ENCODE measurements at regions of chr2 and their contacts with region 1.

Region 1: GRCh38 chr2:171574149-171574795 is 52.0 kb downstream of the CYBRD1 start:
- DNase-seq: peak; percentile 66
- H3K4me3 ChIP-seq: no peak overlapping the region
- H3K27ac ChIP-seq: no peak overlapping the region
- H3K4me1 ChIP-seq: no peaks in the 10 kb centered on the region
- H3K27me3 ChIP-seq: no peaks in the 10 kb centered on the region
- CTCF ChIP-seq: peak; percentile 95 to 97

Region 2: GRCh38 chr2:170973492-170974303 is 600.6 kb before region 1 on chr2:
- CTCF ChIA-PET with region 1: no interaction called
- dilution Hi-C with region 1: no loop called
- in situ Hi-C with region 1: no loop called
- intact Hi-C with region 1: loop called (anchors 10 kb)
- DNase-seq: peak; percentile 9
- H3K4me3 ChIP-seq: peak overlapping the region; percentile 51 to 69 (median 65)
- H3K27ac ChIP-seq: peak overlapping the region; percentile 16
- H3K4me1 ChIP-seq: peaks cover 15% of the 10 kb centered on the region
- H3K27me3 ChIP-seq: no peaks in the 10 kb centered on the region
- CTCF ChIP-seq: peak; percentile 68 to 75

Region 3: DNA sequence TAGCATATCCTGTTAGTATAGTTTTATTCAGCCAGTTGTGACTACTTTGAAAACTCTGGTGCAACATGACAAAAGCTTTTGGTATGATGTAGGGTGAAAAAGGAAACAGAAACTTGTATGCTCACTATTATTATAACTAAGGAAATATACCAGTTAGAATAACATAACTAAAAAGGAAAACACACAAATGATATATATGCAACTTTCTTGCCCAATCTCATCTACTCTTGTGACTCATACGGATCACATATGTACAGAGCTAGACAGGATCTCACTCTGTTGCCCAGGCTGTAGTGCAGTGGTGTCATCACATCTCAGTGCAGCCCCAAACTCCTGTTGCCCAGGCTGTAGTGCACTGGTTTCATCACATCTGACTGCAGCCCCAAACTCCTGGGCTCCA is 401.2 kb before region 1 on chr2:
- CTCF ChIA-PET with region 1: no interaction called
- dilution Hi-C with region 1: no loop called
- in situ Hi-C with region 1: no loop called
- intact Hi-C with region 1: no loop called
- DNase-seq: no peak
- H3K4me3 ChIP-seq: no peak overlapping the region
- H3K27ac ChIP-seq: no peak overlapping the region
- H3K4me1 ChIP-seq: peaks cover 4% of the 10 kb centered on the region
- H3K27me3 ChIP-seq: no peaks in the 10 kb centered on the region
- CTCF ChIP-seq: no peak

Region 4: GRCh38 chr2:171307560-171307959 is 266.7 kb before region 1 on chr2:
- CTCF ChIA-PET with region 1: no interaction called
- dilution Hi-C with region 1: no loop called
- in situ Hi-C with region 1: no loop called
- intact Hi-C with region 1: no loop called
- DNase-seq: no peak
- H3K4me3 ChIP-seq: no peak overlapping the region
- H3K27ac ChIP-seq: no peak overlapping the region
- H3K4me1 ChIP-seq: no peaks in the 10 kb centered on the region
- H3K27me3 ChIP-seq: no peaks in the 10 kb centered on the region
- CTCF ChIP-seq: no peak

Region 5: GRCh38 chr2:171670655-171671054 is 96.4 kb after region 1 on chr2:
- CTCF ChIA-PET with region 1: no interaction called
- dilution Hi-C with region 1: no loop called
- in situ Hi-C with region 1: no loop called
- intact Hi-C with region 1: no loop called
- DNase-seq: no peak
- H3K4me3 ChIP-seq: no peak overlapping the region
- H3K27ac ChIP-seq: no peak overlapping the region
- H3K4me1 ChIP-seq: no peaks in the 10 kb centered on the region
- H3K27me3 ChIP-seq: no peaks in the 10 kb centered on the region
- CTCF ChIP-seq: no peak

Region 6: GRCh38 chr2:171687287-171688128 is 113.2 kb after region 1 on chr2 and contains the start of gene DYNC1I2:
- CTCF ChIA-PET with region 1: no interaction called
- dilution Hi-C with region 1: no loop called
- in situ Hi-C with region 1: no loop called
- intact Hi-C with region 1: loop called (anchors 5 kb)
- DNase-seq: peak; percentile 94
- H3K4me3 ChIP-seq: peak within 1 kb of the TSS; percentile 69 to 82 (median 71)
- H3K27ac ChIP-seq: peak within 1 kb of the TSS; percentile 86
- H3K4me1 ChIP-seq: no peaks in the 10 kb centered on the region
- H3K27me3 ChIP-seq: no peaks in the 10 kb centered on the region
- CTCF ChIP-seq: no peak
- total RNA-seq, gene DYNC1I2: 97.4 to 119 TPM

Region 7: DNA sequence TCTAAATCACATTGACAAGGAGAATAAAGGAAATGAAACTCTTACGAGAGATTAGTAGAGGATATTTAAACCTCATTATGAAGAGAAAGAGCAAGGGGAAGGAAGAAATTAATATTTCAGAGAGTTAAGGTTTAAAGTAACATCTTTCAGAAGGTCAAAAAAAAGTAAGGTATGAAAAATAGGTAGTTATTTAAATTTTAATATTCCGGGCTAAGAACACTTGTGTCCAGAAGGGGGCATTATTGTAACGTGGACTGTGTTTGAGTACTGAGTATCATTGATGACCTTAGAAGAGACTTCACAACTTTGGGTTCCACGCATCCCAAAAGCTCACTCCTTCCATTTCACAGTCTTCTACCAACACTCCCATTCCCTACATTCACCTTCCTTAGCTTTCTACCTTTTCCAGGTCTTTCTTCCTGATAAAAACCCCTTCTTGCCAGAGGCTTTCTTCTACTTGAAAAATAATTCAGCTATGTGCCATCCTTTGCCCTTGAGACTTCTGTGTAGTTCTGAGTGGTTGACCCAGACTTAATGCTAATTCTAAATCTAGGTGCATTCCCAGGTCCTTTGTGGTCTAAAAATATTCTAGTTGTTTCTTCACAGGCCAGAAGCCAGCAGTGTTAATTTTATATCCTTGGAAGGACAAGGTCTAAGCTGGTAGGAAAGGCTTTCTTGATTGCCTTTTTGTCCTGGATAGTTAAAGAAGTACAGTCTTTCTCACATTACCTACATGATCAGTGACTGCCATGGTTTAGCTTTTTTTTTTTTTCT is 129.5 kb after region 1 on chr2:
- CTCF ChIA-PET with region 1: interaction called, 5 read pairs
- dilution Hi-C with region 1: no loop called
- in situ Hi-C with region 1: no loop called
- intact Hi-C with region 1: loop called (anchors 2 kb)
- DNase-seq: peak; percentile 23
- H3K4me3 ChIP-seq: no peak overlapping the region
- H3K27ac ChIP-seq: no peak overlapping the region
- H3K4me1 ChIP-seq: peaks cover 9% of the 10 kb centered on the region
- H3K27me3 ChIP-seq: no peaks in the 10 kb centered on the region
- CTCF ChIP-seq: peak; percentile 41 to 54

Region 8: GRCh38 chr2:171811245-171811628 is 237.0 kb after region 1 on chr2:
- CTCF ChIA-PET with region 1: interaction called, 11 read pairs
- dilution Hi-C with region 1: no loop called
- in situ Hi-C with region 1: no loop called
- intact Hi-C with region 1: loop called (anchors 2 kb)
- DNase-seq: peak; percentile 20
- H3K4me3 ChIP-seq: no peak overlapping the region
- H3K27ac ChIP-seq: no peak overlapping the region
- H3K4me1 ChIP-seq: peaks cover 15% of the 10 kb centered on the region
- H3K27me3 ChIP-seq: no peaks in the 10 kb centered on the region
- CTCF ChIP-seq: peak; percentile 32 to 46

Region 9: DNA sequence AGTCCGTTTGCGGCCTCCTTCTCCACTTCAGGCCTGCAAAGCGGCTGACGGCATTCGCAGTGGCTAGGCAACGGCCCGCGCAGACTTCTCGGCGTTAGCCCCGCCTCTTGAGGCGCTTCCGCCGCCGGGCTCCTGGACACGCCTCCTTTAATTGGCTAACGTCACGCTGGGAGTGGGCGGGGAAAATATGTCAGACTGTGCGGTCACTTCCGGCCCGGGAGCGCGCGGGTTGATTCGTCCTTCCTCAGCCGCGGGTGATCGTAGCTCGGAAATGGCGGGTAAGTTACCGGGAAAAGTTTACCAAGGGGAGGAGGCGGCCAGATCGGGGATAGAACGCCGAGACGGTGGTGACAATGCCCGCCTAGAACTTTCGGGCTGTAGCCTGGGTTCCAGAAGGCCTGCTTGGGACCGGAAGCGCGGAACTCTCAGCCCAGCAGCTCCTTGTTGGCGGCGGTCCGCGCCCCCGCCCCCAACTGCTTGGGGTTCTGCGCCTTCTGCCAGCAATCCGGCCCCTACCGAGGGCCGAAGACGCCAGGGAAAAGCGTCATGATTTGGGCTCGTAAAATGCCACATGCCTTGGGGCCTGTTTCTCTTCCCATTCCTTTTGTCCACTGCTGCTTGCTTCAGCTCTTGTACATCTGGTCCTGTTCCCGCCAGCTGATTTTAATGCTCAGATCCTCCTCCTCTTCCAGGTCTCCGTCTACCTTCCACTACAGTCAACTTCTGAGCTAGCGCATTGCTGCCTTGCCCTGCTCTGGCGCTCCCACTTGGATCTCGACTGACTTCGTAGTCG is 348.2 kb after region 1 on chr2 and contains the start of gene HAT1:
- CTCF ChIA-PET with region 1: interaction called, 5 read pairs
- dilution Hi-C with region 1: no loop called
- in situ Hi-C with region 1: no loop called
- intact Hi-C with region 1: loop called (anchors 10 kb)
- DNase-seq: peak; percentile 96
- H3K4me3 ChIP-seq: peak within 1 kb of the TSS; percentile 72 to 77 (median 73)
- H3K27ac ChIP-seq: peak within 1 kb of the TSS; percentile 88
- H3K4me1 ChIP-seq: no peaks in the 10 kb centered on the region
- H3K27me3 ChIP-seq: no peaks in the 10 kb centered on the region
- CTCF ChIP-seq: no peak
- total RNA-seq, gene HAT1: 30.8 to 56.3 TPM

Region 10: GRCh38 chr2:172052000-172052983 is 478.0 kb after region 1 on chr2:
- CTCF ChIA-PET with region 1: no interaction called
- dilution Hi-C with region 1: no loop called
- in situ Hi-C with region 1: no loop called
- intact Hi-C with region 1: no loop called
- DNase-seq: peak; percentile 5
- H3K4me3 ChIP-seq: no peak overlapping the region
- H3K27ac ChIP-seq: no peak overlapping the region
- H3K4me1 ChIP-seq: no peaks in the 10 kb centered on the region
- H3K27me3 ChIP-seq: no peaks in the 10 kb centered on the region
- CTCF ChIP-seq: no peak

Region 11: DNA sequence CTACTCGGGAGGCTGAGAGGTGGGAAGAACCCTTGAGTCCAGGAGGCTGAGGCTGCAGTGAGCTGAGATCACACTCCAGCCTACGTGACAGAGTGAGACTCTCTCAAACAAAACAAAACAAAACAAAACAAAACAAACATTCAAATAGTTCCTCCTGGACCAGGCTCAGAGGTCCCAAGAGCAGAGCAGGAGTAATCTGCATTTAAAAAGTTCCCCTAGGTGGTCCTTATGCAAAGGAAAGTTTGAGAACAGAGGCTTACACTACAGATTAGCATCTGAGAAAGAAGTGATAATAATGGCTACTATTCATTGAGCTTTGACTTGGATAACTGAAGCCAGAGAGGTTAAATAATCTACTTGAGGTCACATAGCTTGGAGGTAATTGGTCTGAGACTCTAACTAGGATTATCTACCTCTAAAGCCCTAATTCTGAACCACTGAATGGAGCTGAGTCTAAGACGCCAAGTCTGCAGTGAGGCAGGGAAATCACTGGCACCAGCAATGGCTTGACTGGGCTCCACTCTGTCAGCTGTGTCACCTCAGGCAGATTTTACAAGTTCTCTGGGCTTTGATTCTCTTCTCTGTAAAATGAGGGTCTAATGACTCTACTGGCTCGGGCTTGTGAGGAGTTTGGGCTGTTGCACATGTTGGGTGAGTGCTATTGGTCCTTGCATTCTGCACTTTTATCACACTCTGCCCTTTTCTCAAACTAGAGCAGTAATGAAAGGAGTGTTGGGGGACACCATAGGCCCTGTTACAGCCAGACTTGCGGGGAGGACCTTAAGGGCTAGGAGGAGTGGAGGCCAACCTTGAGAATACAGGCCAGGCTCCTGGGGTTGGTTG is 557.7 kb after region 1 on chr2:
- CTCF ChIA-PET with region 1: no interaction called
- dilution Hi-C with region 1: no loop called
- in situ Hi-C with region 1: loop called in 1 of 2 experiments (anchors 25 kb)
- intact Hi-C with region 1: loop called (anchors 5 kb)
- DNase-seq: no peak
- H3K4me3 ChIP-seq: no peak overlapping the region
- H3K27ac ChIP-seq: no peak overlapping the region
- H3K4me1 ChIP-seq: no peaks in the 10 kb centered on the region
- H3K27me3 ChIP-seq: no peaks in the 10 kb centered on the region
- CTCF ChIP-seq: no peak